ENCODE measurements at regions of chr3 and their contacts with region 1.

Region 1: DNA sequence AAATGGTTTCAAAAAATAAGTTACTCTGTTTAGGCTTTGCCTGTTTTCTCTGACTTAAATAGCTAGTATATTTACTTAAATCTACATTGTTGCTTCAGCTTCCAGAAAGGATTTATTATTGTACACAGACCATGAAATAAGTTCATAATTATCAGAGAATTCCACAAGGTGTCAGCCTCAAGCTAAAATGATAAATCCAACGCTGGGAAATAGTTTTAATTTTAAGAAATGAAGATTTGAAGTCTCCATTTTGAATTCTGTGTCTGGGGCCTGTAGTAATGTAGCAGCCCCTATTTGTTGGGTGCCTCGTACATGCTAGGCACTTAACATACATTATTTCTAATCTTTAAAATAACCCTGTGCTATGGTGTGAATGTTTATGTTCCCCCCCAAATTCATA is 92.6 kb upstream of the KCNMB2 start:
- DNase-seq: peak in 1 of 2 donors; percentile 26
- H3K4me3 ChIP-seq: no peak overlapping the region
- H3K27ac ChIP-seq: no peak overlapping the region
- H3K4me1 ChIP-seq: peaks cover 0 to 3% (median 0%) of the 10 kb centered on the region in 4 donors
- H3K27me3 ChIP-seq: no peaks in the 10 kb centered on the region
- CTCF ChIP-seq: no peak
- EP300 ChIP-seq: no peak
- POLR2A ChIP-seq: no peak

Region 2: DNA sequence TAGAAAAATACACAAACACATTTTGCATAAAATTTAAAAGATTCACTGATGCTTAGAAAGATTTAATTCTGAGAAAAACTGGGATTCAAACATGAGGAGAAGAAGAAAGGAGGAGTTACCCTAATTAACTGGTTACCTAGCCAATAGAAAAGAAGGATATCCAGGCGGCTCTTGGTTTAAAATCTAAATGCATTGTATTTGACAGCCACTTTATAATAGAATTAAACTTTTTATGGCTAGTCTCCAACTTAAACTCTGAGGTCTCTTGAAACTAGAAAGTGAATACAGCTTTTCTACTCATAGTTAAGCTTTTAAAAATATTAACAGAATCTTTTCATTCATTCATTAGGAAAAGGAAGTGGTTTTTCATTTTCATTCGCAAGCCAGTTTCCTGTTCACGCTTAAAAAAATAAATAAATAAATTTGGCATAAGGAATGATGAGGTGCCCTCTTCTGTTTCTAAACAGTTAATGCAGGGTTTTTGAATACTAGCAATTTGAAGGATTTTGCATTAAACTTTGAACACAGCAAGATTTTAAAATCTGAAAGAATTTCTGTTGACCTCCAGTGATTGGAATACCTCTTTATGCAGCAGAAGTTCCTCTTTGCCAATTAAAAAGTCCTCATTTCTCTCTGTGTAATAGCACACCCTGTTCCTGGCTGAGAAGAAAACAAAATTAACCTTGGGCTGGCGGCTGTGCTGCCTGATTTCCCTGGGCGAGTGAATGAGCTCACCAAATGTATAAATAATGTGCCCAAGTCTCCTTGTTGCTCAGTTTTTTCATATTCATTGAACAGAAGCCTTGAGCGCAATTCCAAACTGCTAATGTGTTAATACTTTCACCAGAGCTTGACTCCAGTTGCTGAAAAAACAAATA is 522.9 kb after region 1 on chr3:
- intact Hi-C with region 1: loop called (anchors 10 kb)
- DNase-seq: peak in 1 of 2 donors; percentile 49
- H3K4me3 ChIP-seq: peak overlapping the region in 1 of 4 donors; percentile 1
- H3K27ac ChIP-seq: peak overlapping the region in 3 of 5 donors; percentile 6 to 44 (median 8)
- H3K4me1 ChIP-seq: peaks cover 7 to 19% (median 11%) of the 10 kb centered on the region in 4 donors
- H3K27me3 ChIP-seq: no peaks in the 10 kb centered on the region
- CTCF ChIP-seq: peak in 3 of 7 experiments; percentile 13 to 34 (median 19)
- EP300 ChIP-seq: no peak
- POLR2A ChIP-seq: no peak